Activated T-helper 1 cell treated with anti-CD3 and anti-CD28 coated beads, Interleukin-12 subunit alpha, Interleukin-12 subunit beta, Interleukin-2, Interleukin-4 antibody, amounts not matched to agents 30 ng/mL and 10 ng/mL and 1 ng/mL, durations not matched to agents 14 hours and 24 hours and 36 hours (primary cell): ENCODE measurements at regions of chr11 and their contacts with region 1.

Region 1: GRCh38 chr11:66112601-66113098 is 42.6 kb downstream of the PACS1 start:
- DNase-seq: no peak
- H3K4me3 Mint-ChIP-seq: no peak overlapping the region
- H3K27ac Mint-ChIP-seq: peak overlapping the region; percentile 37
- H3K4me1 Mint-ChIP-seq: peaks cover 76% of the 10 kb centered on the region
- H3K27me3 Mint-ChIP-seq: no peaks in the 10 kb centered on the region

Region 2: GRCh38 chr11:66100272-66101065 is 12.2 kb before region 1 on chr11:
- intact Hi-C with region 1: loop called (anchors 1 kb)
- DNase-seq: peak; percentile 63
- H3K4me3 Mint-ChIP-seq: peak overlapping the region; percentile 83
- H3K27ac Mint-ChIP-seq: peak overlapping the region; percentile 86
- H3K4me1 Mint-ChIP-seq: peaks cover 53% of the 10 kb centered on the region
- H3K27me3 Mint-ChIP-seq: no peaks in the 10 kb centered on the region

Region 3: DNA sequence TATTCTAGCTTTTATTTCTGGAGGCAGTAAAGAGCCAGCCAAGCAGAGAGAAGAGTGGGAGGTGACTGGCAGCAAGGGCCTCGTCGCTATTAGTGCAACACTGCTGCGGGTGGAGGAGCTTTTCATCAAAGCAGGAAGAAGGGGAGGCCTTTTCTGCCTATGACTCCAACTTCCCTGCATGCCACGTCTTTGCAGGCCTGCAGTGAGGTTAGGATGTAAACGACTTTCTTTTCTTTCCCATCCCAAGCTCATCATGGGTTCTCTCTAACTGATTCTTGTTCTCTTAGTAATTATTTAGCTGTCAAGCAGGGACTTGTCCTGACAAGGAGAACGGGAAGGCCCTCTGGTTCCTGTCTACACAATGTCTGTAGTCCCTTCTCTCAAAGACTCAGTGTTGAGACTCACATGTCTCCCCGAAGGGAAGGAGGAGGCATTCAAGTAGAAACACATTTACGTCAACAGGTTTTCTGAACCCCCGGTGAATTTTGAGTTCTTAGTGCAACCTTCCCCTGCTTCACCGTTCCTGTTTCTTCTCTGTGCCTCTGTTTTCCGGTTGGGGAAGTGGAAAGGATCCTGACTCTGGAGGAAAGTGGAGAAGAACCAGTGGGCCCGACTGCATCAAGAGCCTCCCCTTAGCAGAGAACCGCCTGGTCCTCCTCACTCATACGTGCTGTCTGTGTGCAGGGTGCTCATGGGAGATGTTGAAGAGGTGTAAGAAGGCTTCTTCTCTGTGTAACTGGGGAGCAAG is 14.3 kb after region 1 on chr11:
- intact Hi-C with region 1: loop called (anchors 1 kb)
- DNase-seq: peak; percentile 38
- H3K4me3 Mint-ChIP-seq: peak overlapping the region; percentile 67
- H3K27ac Mint-ChIP-seq: peak overlapping the region; percentile 97
- H3K4me1 Mint-ChIP-seq: peaks cover 59% of the 10 kb centered on the region
- H3K27me3 Mint-ChIP-seq: no peaks in the 10 kb centered on the region